Activated CD4-positive, alpha-beta memory T cell treated with anti-CD3 and anti-CD28 coated beads for 36 hours (primary cell): ENCODE measurements at regions of chr1 and their contacts with region 1.

Region 1: DNA sequence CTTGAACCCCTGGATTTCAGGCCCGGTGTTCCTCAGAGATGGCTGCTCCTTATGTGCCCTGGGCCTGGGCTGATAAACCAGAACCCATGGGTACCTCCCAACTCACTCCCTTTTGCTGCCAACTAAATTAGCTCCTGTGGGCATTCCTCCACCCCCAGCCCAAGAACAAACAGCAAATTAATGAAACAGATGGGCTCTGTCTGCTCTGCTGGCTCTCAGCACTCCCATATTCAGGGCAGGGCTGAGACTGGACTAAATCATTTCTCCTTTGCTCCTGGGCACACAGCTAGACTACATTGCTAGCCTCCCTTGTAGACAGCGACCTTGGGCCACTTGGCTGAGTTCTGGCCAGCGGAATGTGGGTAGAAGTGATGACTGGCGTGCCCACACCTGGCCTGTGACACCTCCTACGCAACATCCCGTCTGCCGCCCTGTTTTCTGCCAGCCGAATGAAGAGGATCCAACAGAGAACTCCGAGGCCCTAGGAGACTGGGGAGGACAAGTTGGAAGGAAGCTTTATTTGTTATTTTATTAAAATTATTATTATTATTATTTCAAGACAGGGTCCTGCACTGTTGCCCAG is 101.9 kb upstream of the DISP3 start:
- DNase-seq: no peak
- H3K4me3 Mint-ChIP-seq: no peak overlapping the region
- H3K27ac Mint-ChIP-seq: no peak overlapping the region
- H3K4me1 Mint-ChIP-seq: peaks cover 6% of the 10 kb centered on the region
- H3K27me3 Mint-ChIP-seq: no peaks in the 10 kb centered on the region

Region 2: GRCh38 chr1:11364170-11364569 is 12.9 kb before region 1 on chr1:
- CTCF ChIA-PET with region 1: interaction called, 11 read pairs
- POLR2A ChIA-PET with region 1: no interaction called
- intact Hi-C with region 1: no loop called
- DNase-seq: peak; percentile 12
- H3K4me3 Mint-ChIP-seq: no peak overlapping the region
- H3K27ac Mint-ChIP-seq: no peak overlapping the region
- H3K4me1 Mint-ChIP-seq: no peaks in the 10 kb centered on the region
- H3K27me3 Mint-ChIP-seq: no peaks in the 10 kb centered on the region